ENCODE measurements at regions of chr11 and their contacts with region 1.

Region 1: GRCh38 chr11:114280696-114281095 is 15.5 kb upstream of the NNMT start:
- DNase-seq: peak; percentile 26
- H3K4me3 ChIP-seq: no peak overlapping the region
- H3K27me3 ChIP-seq: peaks cover 6% of the 10 kb centered on the region
- CTCF ChIP-seq: peak; percentile 85

Region 2: GRCh38 chr11:114180301-114181055 is 100.2 kb before region 1 on chr11:
- CTCF ChIA-PET with region 1: no interaction called
- POLR2A ChIA-PET with region 1: no interaction called
- DNase-seq: no peak
- H3K4me3 ChIP-seq: no peak overlapping the region
- H3K27me3 ChIP-seq: peaks cover 39% of the 10 kb centered on the region
- CTCF ChIP-seq: peak; percentile 43

Region 3: DNA sequence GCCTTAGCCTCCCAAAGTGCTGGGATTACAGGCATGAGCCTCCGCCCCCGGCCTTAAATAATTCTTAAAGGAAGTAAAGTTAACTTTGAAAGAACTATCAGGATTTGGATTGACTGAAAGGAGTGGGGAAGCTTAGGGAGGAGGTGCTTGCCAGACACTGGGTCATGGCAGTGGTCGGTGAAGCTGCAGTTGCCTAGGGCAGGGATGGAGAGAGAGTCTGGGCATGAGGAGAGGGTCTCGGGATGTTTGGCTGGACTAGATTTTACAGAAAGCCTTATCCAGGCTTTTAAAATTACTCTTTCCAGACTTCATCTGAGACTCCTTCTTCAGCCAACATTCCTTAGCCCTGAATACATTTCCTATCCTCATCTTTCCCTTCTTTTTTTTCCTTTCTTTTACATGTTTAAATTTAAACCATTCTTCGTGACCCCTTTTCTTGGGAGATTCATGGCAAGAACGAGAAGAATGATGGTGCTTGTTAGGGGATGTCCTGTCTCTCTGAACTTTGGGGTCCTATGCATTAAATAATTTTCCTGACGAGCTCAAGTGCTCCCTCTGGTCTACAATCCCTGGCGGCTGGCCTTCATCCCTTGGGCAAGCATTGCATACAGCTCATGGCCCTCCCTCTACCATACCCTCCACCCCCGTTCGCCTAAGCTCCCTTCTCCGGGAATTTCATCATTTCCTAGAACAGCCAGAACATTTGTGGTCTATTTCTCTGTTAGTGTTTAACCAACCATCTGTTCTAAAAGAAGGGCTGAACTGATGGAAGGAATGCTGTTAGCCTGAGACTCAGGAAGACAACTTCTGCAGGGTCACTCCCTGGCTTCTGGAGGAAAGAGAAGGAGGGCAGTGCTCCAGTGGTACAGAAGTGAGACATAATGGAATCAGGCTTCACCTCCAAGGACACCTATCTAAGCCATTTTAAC is 15.2 kb after region 1 on chr11 and contains the start of gene NNMT:
- CTCF ChIA-PET with region 1: interaction called, 22 read pairs
- POLR2A ChIA-PET with region 1: interaction called, 9 read pairs
- DNase-seq: peak; percentile 95
- H3K4me3 ChIP-seq: peak within 1 kb of the TSS; percentile 88
- H3K27me3 ChIP-seq: no peaks in the 10 kb centered on the region
- CTCF ChIP-seq: no peak; the same call in 1 of the 2 replicates
- polyA plus RNA-seq, gene NNMT: 590 and 724 TPM in 2 replicates

Region 4: DNA sequence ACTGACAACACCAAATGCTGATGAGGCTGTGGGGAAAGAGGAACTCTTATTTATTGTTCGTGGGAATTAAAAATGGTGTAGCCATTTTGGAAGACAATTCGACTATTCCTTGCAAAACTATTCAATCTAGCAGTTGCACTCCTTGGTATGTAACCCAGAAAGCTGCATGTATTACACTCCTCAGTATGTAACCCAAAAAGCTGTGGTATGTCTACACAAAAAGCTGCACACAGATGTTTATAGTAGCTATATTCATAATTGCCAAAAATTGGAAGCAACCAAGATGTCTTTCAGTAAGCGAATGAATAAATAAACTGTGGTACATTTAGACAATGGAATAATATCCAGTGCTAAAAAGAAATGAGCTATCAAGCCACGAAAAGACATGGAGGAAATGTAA is 20.4 kb after region 1 on chr11:
- CTCF ChIA-PET with region 1: interaction called, 13 read pairs
- POLR2A ChIA-PET with region 1: interaction called, 9 read pairs
- DNase-seq: no peak
- H3K4me3 ChIP-seq: peak overlapping the region; percentile 88
- H3K27me3 ChIP-seq: no peaks in the 10 kb centered on the region
- CTCF ChIP-seq: no peak

Region 5: GRCh38 chr11:114307524-114308203 is 27.0 kb after region 1 on chr11:
- CTCF ChIA-PET with region 1: interaction called, 15 read pairs
- POLR2A ChIA-PET with region 1: no interaction called
- DNase-seq: peak; percentile 48
- H3K4me3 ChIP-seq: peak overlapping the region; percentile 21; the same call in 1 of the 2 replicates
- H3K27me3 ChIP-seq: no peaks in the 10 kb centered on the region
- CTCF ChIP-seq: no peak

Region 6: DNA sequence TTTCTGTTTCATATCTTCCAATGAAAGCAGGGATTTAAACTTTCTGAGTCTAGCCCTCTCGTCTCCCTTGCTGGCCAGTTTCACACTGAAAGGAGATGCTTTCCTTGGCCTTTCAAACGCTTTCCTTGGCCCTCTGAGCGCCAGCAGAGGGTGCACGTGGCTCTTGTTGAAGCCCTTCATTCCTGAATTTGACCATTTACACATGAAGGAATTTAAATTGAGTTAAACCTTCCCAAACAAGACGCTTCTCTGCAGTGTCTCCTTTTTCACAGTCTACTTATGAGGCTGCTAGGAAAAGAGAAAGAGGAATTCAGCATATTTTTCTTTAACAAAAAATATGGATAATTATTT is 37.1 kb after region 1 on chr11:
- CTCF ChIA-PET with region 1: interaction called, 13 read pairs
- POLR2A ChIA-PET with region 1: no interaction called
- DNase-seq: no peak
- H3K4me3 ChIP-seq: no peak overlapping the region
- H3K27me3 ChIP-seq: no peaks in the 10 kb centered on the region
- CTCF ChIP-seq: peak; percentile 54

Region 7: DNA sequence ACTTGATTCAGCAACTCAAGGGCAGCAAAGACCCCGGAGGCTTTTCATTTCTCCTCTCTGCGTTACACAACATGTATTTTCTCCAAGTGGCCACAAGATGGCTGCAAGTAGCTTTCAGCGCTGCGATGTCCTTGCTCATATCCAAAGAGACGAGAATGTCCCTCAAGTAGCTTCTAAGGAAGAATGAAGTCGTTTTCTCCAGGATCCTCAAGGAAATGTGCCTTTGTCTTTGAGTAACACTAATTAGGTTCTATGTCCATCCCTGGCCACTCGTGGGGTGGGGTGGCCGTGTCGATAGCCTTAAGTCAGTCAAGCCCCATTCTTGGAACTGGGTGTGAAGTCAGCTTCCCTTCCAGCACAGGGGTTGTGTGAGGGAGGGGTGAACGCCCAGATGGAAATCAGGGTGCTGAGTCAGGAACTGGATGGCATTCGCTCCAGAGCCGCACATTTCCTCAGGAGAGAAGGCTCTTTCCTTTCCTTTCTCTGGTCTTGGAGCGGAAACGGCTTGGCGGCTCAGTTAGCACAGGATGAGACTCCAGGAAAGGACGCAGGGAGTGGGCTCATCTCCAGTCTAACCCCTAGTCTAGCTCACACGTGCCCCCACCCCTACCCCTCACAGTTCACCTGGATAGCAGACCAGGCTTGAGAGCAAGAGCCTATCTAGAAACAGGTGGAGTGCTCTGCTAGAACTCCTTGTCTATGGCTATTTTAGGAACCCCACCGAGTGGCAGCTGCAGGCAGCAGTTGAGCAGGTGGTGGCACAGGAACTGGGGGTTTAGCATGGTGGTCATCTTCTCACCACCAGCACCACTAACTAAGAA is 59.8 kb after region 1 on chr11:
- CTCF ChIA-PET with region 1: interaction called, 24 read pairs
- POLR2A ChIA-PET with region 1: no interaction called
- DNase-seq: no peak
- H3K4me3 ChIP-seq: peak overlapping the region; percentile 28
- H3K27me3 ChIP-seq: no peaks in the 10 kb centered on the region
- CTCF ChIP-seq: peak; percentile 86

Region 8: GRCh38 chr11:114348200-114349191 is 67.8 kb after region 1 on chr11:
- CTCF ChIA-PET with region 1: interaction called, 22 read pairs
- POLR2A ChIA-PET with region 1: no interaction called
- DNase-seq: peak; percentile 19
- H3K4me3 ChIP-seq: no peak overlapping the region
- H3K27me3 ChIP-seq: no peaks in the 10 kb centered on the region
- CTCF ChIP-seq: peak; percentile 59

Measured in BJ (cell line).